Posterior cingulate gyrus (tissue), 11 donors: ENCODE measurements at regions of chr4 and their contacts with region 1.

Region 1: GRCh38 chr4:42617030-42617429 is 39.9 kb downstream of the ATP8A1 start:
- DNase-seq: no peak

Region 2: DNA sequence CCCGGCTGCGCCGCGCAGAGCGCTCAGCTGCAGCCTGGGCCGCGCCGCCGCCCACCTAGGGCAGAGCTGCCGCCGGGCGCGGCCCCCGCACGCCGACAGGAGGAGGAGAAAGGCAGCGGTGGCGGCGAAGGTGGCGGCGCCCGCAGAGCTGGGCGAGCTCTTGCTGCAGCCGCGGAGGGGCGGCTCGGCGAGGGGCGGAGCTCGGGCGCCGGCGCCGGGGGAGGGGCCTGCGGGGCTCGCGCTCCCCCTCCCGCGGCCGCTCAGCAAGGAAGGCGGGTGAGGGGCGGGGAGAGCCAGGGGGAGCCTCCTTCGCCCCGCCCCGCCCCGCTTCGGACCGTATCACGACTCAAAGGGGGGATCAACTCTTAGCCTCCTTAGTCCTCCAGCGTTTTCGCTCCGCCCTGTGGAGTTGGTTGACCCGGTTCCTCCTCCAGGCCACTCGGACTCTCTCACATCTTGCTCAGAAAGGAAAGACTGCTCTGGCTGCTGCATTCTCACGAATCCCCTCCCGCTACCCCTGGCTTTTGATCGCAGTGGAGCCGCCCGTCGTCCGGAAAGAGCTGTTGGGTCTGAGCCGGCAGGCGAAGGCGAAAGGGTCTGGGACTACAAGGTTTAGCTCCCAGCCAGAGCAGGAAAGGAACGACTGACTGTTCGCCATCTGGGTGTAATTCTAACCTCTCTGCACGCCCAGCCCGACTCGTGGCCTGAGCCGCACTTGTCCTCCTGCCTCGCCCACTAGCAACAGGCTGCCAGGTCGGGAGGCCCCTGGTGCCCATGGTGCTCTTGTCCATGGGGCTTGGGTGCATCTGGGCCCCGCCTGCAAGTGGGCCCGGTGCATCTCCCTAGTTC is 40.1 kb after region 1 on chr4 and contains the start of gene ATP8A1:
- intact Hi-C with region 1: loop called (anchors 5 kb)
- DNase-seq: peak; percentile 87 to 99 (median 92)